Ascending aorta (tissue), 2 donors: ENCODE measurements at regions of chr6 and their contacts with region 1.

Region 1: DNA sequence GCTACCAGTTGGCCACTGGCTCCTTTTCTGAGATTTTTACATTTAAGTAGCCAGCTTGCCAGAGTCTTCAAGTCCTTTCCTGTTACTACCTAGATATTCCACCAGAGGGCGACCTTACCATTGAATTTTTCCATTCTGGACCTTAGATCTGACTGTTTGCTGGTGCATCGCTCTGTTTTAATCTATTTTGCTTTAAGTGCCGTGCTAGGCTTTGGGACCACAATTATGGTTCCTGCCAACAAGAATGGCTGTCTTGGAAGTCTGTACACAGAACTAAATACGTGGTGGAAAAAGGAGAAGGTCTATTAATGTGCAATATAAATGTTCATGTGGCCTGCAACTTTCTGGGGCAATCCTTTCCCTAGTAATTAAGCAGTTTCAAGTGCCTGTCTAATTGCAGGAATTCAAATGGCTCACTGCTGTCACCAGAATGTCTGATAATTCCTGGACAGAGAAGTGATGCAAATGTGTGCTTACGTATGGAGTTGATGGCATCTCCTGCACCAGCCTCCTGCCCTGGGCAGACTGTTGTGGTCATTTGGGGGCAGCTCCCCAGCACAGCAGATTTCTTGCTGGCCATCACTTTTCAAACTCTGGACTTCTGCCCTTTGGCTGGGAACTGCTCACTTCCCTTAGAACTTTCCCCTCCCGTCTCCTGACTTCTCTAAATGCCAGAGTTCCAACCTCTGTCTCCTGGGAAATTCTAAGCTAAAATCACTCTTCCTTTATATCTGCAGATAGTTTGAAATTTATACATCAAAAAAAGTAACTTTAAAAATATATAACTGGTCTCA is 5.6 kb upstream of the HLA-DOA start:
- DNase-seq: no peak
- H3K4me3 ChIP-seq: no peak overlapping the region
- H3K27ac ChIP-seq: no peak overlapping the region
- H3K4me1 ChIP-seq: peaks cover 4 to 10% of the 10 kb centered on the region in 2 donors
- H3K27me3 ChIP-seq: no peaks in the 10 kb centered on the region
- CTCF ChIP-seq: peak; percentile 77 to 80 (median 77)

Region 2: GRCh38 chr6:32796848-32797776 is 217.9 kb before region 1 on chr6:
- intact Hi-C with region 1: no loop called
- DNase-seq: peak in 1 of 2 donors; percentile 86
- H3K4me3 ChIP-seq: peak overlapping the region; percentile 19 to 45
- H3K27ac ChIP-seq: no peak overlapping the region
- H3K4me1 ChIP-seq: no peaks in the 10 kb centered on the region
- H3K27me3 ChIP-seq: peaks cover 4% of the 10 kb centered on the region
- CTCF ChIP-seq: peak; percentile 80 to 89 (median 88)

Region 3: DNA sequence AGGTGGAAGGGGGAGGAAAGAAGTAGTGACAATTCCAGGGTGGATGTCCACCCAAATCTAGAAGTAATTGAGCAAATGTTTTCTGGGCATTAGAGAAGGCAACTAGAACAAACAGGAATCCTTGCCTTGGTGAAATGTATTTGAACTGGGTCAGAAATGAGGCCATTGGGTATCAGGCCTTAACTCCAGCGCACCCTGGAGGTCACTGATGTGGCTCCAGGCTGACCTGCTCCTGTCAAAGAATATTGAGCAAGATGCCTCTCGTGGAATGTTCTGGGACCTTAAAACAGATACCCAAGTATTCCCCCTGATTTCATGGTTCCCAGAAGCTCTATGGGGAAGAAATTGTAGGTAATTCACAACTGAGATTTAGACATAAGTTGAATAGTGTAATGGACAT is 67.7 kb after region 1 on chr6:
- intact Hi-C with region 1: loop called (anchors 5 kb)
- DNase-seq: no peak
- H3K4me3 ChIP-seq: no peak overlapping the region
- H3K27ac ChIP-seq: peak overlapping the region; percentile 2 to 27
- H3K4me1 ChIP-seq: peaks cover 0 to 3% of the 10 kb centered on the region in 2 donors
- H3K27me3 ChIP-seq: no peaks in the 10 kb centered on the region
- CTCF ChIP-seq: peak in 2 of 3 experiments; percentile 65 to 69

Region 4: GRCh38 chr6:33126101-33126714 is 111.2 kb after region 1 on chr6:
- intact Hi-C with region 1: loop called (anchors 5 kb)
- DNase-seq: peak in 1 of 2 donors; percentile 73
- H3K4me3 ChIP-seq: no peak overlapping the region
- H3K27ac ChIP-seq: no peak overlapping the region
- H3K4me1 ChIP-seq: no peaks in the 10 kb centered on the region
- H3K27me3 ChIP-seq: no peaks in the 10 kb centered on the region
- CTCF ChIP-seq: peak in 2 of 3 experiments; percentile 40 to 58

Region 5: DNA sequence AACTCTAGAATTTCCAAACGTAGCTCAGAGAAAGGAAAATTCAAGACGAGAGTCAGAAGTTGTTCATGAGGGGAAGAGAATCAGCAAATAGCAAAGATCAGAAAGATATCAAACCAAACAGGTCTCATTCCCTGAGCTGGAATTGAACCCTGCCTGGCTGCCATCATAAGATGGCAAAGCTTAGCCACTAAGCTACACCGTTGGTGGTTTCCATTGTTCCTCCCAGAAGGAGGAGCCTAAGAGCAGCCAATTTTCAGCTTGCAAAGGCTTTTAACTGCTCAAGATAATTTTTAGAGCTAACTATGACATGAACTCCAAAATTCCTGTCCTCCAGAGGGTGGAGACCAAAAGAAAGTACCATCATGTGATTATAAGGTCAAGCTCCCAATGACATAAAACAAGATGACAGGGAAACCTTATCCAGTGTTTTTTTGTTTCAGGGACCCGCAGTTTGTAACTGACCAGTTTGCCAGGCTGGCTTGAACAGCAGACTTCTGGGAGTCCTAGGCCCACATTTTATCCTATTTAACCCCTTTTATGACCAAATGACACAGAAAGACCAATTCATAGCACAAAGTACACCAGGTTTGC is 121.4 kb after region 1 on chr6:
- intact Hi-C with region 1: no loop called
- DNase-seq: no peak
- H3K4me3 ChIP-seq: no peak overlapping the region
- H3K27ac ChIP-seq: no peak overlapping the region
- H3K4me1 ChIP-seq: no peaks in the 10 kb centered on the region
- H3K27me3 ChIP-seq: no peaks in the 10 kb centered on the region
- CTCF ChIP-seq: no peak

Region 6: GRCh38 chr6:33147807-33148666 is 133.0 kb after region 1 on chr6:
- intact Hi-C with region 1: loop called (anchors 2 kb)
- DNase-seq: no peak
- H3K4me3 ChIP-seq: no peak overlapping the region
- H3K27ac ChIP-seq: no peak overlapping the region
- H3K4me1 ChIP-seq: no peaks in the 10 kb centered on the region
- H3K27me3 ChIP-seq: no peaks in the 10 kb centered on the region
- CTCF ChIP-seq: peak; percentile 40 to 79 (median 66)